ENCODE measurements at regions of chr2 and their contacts with region 1.

Region 1: DNA sequence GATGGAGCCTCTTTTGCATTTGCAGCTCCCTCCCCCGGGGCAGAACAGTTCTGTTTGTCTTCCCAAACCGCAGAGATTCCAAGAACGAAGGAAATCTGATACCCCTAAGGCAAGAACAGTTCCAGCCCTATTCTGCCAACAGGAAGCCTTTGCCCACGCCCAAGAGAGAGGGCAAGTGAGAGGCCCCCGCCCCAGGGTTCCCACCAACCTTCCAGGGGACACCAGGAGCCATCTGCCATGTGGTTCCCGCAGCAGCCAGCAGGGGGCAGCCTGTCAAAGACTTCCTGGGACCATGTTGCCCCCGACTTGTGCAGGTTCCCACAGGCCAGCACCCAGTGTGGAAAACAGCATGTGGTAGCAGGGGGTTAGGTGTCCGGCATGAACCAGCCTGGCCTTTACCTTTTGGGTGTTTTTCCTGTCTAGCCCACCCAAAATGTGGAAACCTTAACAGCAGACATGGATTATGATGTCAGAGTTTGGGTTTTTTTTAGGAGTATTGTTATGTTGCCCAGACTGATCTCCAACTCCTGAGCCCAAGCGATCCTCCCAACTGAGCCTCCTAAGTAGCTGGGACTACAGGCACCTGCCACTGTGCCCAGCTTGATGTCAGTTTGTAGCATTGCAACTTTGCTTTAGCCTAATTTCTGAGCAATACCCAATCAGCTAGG is 21.7 kb upstream of the EFHD1 start:
- DNase-seq: peak; percentile 62 to 71 (median 70)
- ATAC-seq: peak; percentile 95
- H3K4me3 ChIP-seq: no peak overlapping the region
- H3K27ac ChIP-seq: no peak overlapping the region
- H3K4me1 ChIP-seq: peaks cover 0 to 3% of the 10 kb centered on the region in 2 experiments; a peak in 3 of 5 replicates
- H3K27me3 ChIP-seq: no peaks in the 10 kb centered on the region
- CTCF ChIP-seq: peak; percentile 72 to 87 (median 72)
- EP300 ChIP-seq: no peak
- POLR2A ChIP-seq: no peak
- RAD21 ChIP-seq: peak; percentile 35 to 61; a peak in 3 of 4 replicates

Region 2: DNA sequence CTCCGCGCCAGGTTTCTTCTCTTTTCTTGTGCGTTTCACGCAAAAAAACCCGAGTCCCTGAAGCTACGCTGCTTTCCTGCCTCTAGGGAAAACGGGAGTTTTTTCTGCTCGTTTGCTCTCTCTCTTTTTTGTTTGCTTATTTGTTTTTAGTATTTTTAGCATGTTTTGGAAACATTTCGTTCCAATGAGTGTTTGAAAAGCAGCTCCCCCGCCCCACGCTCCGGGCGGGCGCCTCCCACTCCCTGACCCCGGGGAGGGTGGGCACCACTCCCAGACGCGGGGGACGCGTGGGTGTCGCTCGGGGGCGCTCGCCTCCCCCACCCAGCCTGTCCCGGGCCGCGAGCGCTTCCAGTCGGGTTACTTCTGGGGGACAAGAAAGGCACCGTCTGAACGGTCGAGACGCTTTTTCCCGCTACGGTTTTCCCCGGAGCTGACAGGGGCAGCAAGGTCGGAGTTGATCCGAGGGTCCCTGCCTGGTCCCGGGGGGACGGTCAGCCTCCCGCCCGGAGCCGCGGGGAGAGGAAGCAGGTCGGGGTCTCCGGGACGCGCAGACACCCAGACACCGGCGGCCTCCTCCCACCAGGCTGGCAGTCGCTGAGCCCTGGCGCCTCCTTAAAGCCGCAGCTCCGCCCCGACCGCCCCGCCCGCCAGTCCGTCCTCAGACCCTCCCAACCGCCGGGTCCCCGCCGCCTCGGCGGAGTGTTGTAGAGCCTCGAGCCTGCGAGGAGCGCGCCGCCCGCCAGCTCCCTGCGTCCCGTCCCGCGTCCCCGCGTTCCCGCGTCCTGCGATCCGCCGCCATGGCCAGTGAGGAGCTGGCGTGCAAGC is 21.4 kb after region 1 on chr2 and contains the start of gene EFHD1:
- CTCF ChIA-PET with region 1: no interaction called
- POLR2A ChIA-PET with region 1: no interaction called
- in situ Hi-C with region 1: no loop called
- intact Hi-C with region 1: loop called (anchors 2 kb)
- DNase-seq: peak; percentile 70 to 72 (median 72)
- ATAC-seq: peak; percentile 95
- H3K4me3 ChIP-seq: peak within 1 kb of the TSS; percentile 48
- H3K27ac ChIP-seq: no peak within 1 kb of the TSS; the same call in 2 of the 3 replicates
- H3K4me1 ChIP-seq: peaks cover 0 to 21% of the 10 kb centered on the region in 2 experiments; a peak in 3 of 5 replicates
- H3K27me3 ChIP-seq: no peaks in the 10 kb centered on the region; a peak in 2 of 5 replicates
- CTCF ChIP-seq: no peak
- EP300 ChIP-seq: no peak
- POLR2A ChIP-seq: no peak
- RAD21 ChIP-seq: no peak
- polyA plus RNA-seq, gene EFHD1: 0.66 to 1.2 TPM

Region 3: DNA sequence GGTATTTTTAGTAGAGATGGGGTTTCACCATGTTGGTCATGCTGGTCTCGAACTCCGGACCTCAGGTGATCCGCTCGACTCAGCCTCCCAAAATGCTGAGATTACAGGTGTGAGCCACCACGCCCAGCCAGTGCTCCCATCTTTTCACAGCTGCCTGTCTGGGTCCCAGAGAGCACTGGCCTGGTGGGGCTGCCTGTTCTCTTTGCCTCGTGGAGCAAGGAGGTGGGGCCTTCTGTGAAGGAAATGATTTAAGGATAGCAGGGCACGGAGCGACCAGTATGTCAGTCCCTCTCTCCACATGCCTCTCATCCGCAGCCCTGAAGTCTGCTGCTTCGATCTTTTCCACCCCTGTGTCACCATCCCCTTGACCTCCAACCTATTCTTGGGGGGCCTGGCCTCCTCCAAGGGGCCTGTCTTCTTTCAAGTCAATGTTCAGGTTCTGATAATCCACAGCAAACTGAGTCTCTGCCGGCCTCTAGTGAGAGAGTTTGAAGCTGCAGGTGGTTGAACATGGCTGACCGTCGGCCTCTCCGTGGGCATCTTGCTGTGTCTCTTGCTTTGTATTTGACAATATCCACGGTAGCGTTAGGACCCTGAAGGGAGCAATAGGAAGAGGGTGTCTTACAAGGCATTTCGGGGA is 57.2 kb after region 1 on chr2:
- CTCF ChIA-PET with region 1: interaction called, 12 read pairs
- POLR2A ChIA-PET with region 1: no interaction called
- in situ Hi-C with region 1: no loop called
- intact Hi-C with region 1: loop called (anchors 1 kb)
- DNase-seq: peak in 2 of 4 experiments; percentile 19 to 26
- ATAC-seq: peak; percentile 78; the same call in 2 of the 3 replicates
- H3K4me3 ChIP-seq: no peak overlapping the region
- H3K27ac ChIP-seq: no peak overlapping the region
- H3K4me1 ChIP-seq: no peaks in the 10 kb centered on the region; a peak in 2 of 5 replicates
- H3K27me3 ChIP-seq: peaks cover 0 to 13% of the 10 kb centered on the region in 2 experiments; a peak in 3 of 5 replicates
- CTCF ChIP-seq: peak; percentile 46 to 65 (median 61)
- EP300 ChIP-seq: no peak
- POLR2A ChIP-seq: no peak
- RAD21 ChIP-seq: peak; percentile 23 to 48; a peak in 3 of 4 replicates

Region 4: GRCh38 chr2:232838406-232838874 is 226.8 kb after region 1 on chr2:
- CTCF ChIA-PET with region 1: no interaction called
- POLR2A ChIA-PET with region 1: no interaction called
- in situ Hi-C with region 1: no loop called
- intact Hi-C with region 1: loop called (anchors 5 kb)
- DNase-seq: peak; percentile 19 to 41 (median 28)
- ATAC-seq: peak; percentile 68
- H3K4me3 ChIP-seq: no peak overlapping the region
- H3K27ac ChIP-seq: peak overlapping the region; percentile 40; the same call in 2 of the 3 replicates
- H3K4me1 ChIP-seq: peaks cover 0 to 20% of the 10 kb centered on the region in 2 experiments; a peak in 4 of 5 replicates
- H3K27me3 ChIP-seq: no peaks in the 10 kb centered on the region
- CTCF ChIP-seq: no peak
- EP300 ChIP-seq: peak; percentile 48; the same call in 1 of the 2 replicates
- POLR2A ChIP-seq: no peak
- RAD21 ChIP-seq: no peak

Measured in K562 (cell line).